ENCODE measurements at regions of chr2 and their contacts with region 1.

Region 1: DNA sequence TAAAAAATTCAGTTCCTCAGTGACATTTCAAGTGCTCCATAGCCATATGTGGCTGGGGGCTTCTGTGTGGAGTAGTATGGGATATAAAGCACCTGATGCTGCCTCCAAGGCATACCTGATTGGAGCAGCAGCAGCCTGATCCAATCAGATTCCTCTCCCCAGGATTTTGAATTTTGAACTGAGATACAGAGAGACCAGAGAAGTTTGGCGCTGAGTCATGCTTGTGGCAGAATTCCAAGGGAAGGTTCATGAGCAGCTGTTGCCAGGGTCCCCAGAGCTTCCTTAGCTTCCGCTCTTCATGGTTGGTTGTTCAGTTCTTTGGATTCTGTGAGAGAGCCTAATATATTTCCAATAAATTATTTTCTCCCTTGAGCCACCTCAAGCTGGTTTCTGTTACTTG is 29.0 kb upstream of the CFAP36 start:
- DNase-seq: no peak
- H3K4me3 ChIP-seq: no peak overlapping the region
- H3K27ac ChIP-seq: no peak overlapping the region
- H3K4me1 ChIP-seq: no peaks in the 10 kb centered on the region
- H3K27me3 ChIP-seq: no peaks in the 10 kb centered on the region
- CTCF ChIP-seq: no peak
- EP300 ChIP-seq: no peak
- POLR2A ChIP-seq: no peak
- RAD21 ChIP-seq: no peak

Region 2: DNA sequence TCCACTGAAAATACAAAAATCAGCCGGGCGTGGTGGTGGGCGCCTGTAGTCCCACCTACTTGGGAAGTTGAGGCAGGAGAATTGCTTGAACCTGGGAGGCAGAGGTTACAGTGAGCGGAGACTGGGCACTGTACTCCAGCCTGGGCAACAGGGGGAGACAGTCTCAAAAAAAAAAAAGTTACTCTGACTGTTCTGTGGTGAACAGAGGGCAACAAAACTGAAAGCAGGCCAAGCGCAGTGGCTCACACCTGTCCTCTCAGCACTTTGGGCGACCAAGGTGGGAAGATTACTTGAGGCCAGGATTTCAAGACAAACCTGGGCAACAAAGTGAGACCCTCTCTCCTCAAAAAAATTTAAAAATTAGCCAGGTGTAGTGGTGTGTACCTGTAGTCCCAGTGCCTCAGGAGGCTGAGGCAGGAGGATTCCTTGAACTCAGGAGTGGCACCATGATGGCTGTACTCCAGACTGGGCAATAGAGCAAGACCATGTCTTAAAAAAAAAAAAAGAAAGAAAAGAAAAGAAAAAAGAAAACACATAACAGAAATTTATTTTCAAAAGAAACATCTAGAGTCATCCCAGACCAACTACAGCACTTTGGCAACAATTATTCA is 426.7 kb before region 1 on chr2:
- CTCF ChIA-PET with region 1: no interaction called
- POLR2A ChIA-PET with region 1: no interaction called
- DNase-seq: no peak
- H3K4me3 ChIP-seq: no peak overlapping the region
- H3K27ac ChIP-seq: no peak overlapping the region
- H3K4me1 ChIP-seq: no peaks in the 10 kb centered on the region
- H3K27me3 ChIP-seq: no peaks in the 10 kb centered on the region
- CTCF ChIP-seq: peak; percentile 27 to 43 (median 35); a peak in 3 of 4 replicates
- EP300 ChIP-seq: no peak
- POLR2A ChIP-seq: no peak
- RAD21 ChIP-seq: peak; percentile 47 to 63

Region 3: DNA sequence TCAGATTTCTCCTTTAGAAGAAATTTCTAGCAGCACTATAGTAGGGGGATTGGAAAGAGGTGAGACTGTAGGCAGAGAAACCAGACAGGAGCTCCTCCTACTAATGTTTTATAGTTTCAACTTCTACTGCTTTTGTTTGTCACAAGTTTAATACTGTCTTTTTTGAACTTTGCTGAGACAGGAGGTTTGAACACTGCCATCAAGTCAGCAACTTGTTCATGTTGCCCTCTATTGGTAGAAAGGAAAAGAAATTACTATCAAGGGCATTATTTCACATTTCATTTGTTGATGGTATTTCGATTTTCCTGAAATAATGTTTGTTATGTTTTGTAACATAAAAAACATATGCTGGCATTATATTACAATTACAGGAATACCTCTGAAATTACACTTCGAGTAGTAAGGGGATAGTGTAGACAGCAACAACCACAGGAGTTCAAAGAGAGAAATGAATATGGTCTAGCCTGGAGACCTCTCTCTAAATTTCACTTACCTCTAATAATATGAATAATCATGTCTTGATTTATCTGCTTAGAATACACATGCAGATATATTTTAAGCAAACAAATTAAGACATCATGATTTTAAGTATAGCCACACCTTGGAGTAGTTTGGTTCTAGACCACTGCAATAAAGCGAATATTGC is 58.4 kb before region 1 on chr2:
- CTCF ChIA-PET with region 1: interaction called, 10 read pairs
- POLR2A ChIA-PET with region 1: no interaction called
- DNase-seq: no peak
- H3K4me3 ChIP-seq: no peak overlapping the region
- H3K27ac ChIP-seq: no peak overlapping the region
- H3K4me1 ChIP-seq: no peaks in the 10 kb centered on the region
- H3K27me3 ChIP-seq: no peaks in the 10 kb centered on the region
- CTCF ChIP-seq: peak in 1 of 3 experiments; percentile 54; a peak in 2 of 4 replicates
- EP300 ChIP-seq: no peak
- POLR2A ChIP-seq: no peak
- RAD21 ChIP-seq: peak; percentile 62 to 63

Region 4: DNA sequence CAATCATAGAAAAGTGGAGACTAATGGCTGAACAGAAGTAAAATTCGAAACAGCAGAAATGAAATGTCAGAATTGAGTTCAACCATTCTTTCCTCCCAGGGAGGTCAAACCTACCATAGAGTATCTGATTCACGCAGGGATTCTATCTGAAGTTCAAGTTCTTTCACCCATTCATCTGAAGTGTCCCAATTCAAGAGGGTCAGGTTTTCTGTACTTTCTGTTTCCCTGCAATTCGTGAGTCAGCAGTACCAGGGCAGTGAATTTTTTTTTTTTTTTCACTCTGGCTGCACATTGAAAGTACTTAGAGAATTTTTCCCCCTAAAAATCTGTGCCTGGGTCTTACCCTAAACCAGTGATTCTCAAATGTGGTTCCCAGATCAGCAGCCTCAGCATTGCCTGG is 30.0 kb before region 1 on chr2:
- CTCF ChIA-PET with region 1: no interaction called
- POLR2A ChIA-PET with region 1: no interaction called
- DNase-seq: no peak
- H3K4me3 ChIP-seq: no peak overlapping the region
- H3K27ac ChIP-seq: no peak overlapping the region
- H3K4me1 ChIP-seq: no peaks in the 10 kb centered on the region
- H3K27me3 ChIP-seq: no peaks in the 10 kb centered on the region
- CTCF ChIP-seq: no peak
- EP300 ChIP-seq: no peak
- POLR2A ChIP-seq: no peak
- RAD21 ChIP-seq: no peak

Region 5: DNA sequence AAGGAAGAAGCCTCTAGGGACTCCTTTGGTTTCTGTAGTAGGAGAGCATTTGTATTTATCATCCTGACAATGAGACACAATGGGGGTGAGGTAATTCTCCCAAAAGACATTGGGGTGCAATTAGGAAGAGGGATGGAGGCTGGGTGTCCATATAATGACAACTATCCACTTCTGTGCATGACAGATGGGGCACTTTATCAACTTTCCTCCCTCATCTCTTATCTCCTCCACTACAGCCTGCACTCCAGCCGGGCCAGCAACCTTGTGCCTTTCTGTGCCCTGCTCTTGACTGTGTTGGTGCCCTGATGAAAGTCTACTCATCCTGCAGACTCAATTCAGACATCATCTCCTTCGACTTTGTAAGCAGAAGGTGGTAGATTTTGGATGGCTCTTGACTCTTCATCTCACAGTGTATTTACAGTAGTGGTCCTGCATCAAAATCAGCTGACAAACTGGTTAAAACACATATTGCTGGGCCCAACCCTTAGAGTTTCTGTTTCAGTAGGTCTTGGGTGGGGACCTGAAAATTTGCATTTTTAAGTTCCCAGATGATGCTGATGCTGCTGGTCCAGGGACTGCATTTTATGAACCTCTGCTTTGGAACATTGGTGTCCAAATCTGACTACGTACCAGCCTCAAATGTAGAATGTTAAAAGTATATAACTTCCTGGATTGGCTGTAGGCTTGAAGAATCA is 11.8 kb before region 1 on chr2:
- CTCF ChIA-PET with region 1: no interaction called
- POLR2A ChIA-PET with region 1: no interaction called
- DNase-seq: no peak
- H3K4me3 ChIP-seq: no peak overlapping the region
- H3K27ac ChIP-seq: no peak overlapping the region
- H3K4me1 ChIP-seq: peaks cover 0 to 2% (median 0%) of the 10 kb centered on the region in 4 experiments; a peak in 2 of 7 replicates
- H3K27me3 ChIP-seq: no peaks in the 10 kb centered on the region
- CTCF ChIP-seq: no peak
- EP300 ChIP-seq: no peak
- POLR2A ChIP-seq: no peak
- RAD21 ChIP-seq: no peak

Measured in H1 (cell line).